Upper lobe of right lung (tissue), 1 donor: ENCODE measurements at regions of chr10 and their contacts with region 1.

Region 1: DNA sequence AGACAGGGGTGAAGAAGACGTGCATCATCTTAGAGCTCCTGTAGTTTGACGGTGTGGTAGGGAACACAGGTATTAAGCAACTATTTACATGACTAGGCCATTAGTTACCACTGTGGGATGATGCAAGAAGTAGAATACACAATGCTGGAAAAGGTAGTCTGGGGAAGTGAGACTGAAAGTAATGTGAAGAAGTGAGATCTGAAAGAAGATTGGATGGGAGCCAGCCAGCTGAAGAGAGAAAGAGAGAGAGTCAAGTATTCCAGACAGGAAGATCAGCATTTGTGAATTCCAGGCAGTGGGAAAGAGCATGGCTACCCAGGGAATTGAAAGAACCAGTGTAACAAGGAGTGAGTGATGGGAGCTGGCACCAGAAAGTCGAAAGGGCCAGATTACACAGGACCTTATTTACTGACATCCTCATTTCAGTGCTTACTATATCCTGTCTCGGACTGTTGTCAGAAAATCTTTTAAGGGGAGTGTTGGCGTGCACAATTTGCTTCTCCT is 4.0 kb upstream of the CFAP58 start:
- DNase-seq: no peak
- ATAC-seq: peak; percentile 64
- H3K4me3 ChIP-seq: peak overlapping the region; percentile 2
- H3K27ac ChIP-seq: peak overlapping the region; percentile 80
- H3K4me1 ChIP-seq: peaks cover 30% of the 10 kb centered on the region
- H3K27me3 ChIP-seq: no peaks in the 10 kb centered on the region
- CTCF ChIP-seq: no peak

Region 2: GRCh38 chr10:104291439-104291951 is 58.2 kb before region 1 on chr10:
- intact Hi-C with region 1: loop called (anchors 5 kb)
- DNase-seq: peak; percentile 94
- ATAC-seq: peak; percentile 100
- H3K4me3 ChIP-seq: no peak overlapping the region
- H3K27ac ChIP-seq: no peak overlapping the region
- H3K4me1 ChIP-seq: peaks cover 3% of the 10 kb centered on the region
- H3K27me3 ChIP-seq: no peaks in the 10 kb centered on the region
- CTCF ChIP-seq: no peak

Region 3: DNA sequence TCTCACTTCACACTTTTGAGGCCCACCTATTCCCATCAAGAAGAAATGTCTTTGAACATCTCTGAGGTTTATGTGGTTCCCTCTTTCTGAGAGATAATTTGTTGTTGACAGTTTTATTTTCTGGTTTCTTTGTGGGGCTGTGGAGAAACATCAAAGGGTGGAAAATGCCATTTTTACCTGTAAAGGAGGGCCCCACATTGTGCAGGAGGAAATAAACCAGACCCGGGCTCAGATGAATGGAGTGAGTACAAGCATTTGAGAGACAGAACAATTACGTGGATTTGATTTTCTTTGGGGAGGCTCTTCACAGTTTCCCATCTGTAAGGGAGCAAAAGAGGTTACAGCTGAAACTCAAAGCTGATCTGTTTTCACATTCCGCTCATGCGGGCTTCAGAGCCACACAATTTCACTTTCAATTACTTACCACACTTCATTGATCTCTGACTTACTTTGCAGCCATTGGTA is 41.2 kb before region 1 on chr10:
- intact Hi-C with region 1: loop called (anchors 5 kb)
- DNase-seq: no peak
- ATAC-seq: no peak
- H3K4me3 ChIP-seq: no peak overlapping the region
- H3K27ac ChIP-seq: no peak overlapping the region
- H3K4me1 ChIP-seq: peaks cover 15% of the 10 kb centered on the region
- H3K27me3 ChIP-seq: no peaks in the 10 kb centered on the region
- CTCF ChIP-seq: no peak